ENCODE measurements at regions of chr3 and their contacts with region 1.

Region 1: GRCh38 chr3:182837855-182838454 is 44.7 kb downstream of the ATP11B start:
- DNase-seq: peak; percentile 39
- H3K4me3 ChIP-seq: no peak overlapping the region
- H3K27ac ChIP-seq: no peak overlapping the region
- H3K4me1 ChIP-seq: no peaks in the 10 kb centered on the region
- H3K27me3 ChIP-seq: no peaks in the 10 kb centered on the region
- CTCF ChIP-seq: peak; percentile 61

Region 2: GRCh38 chr3:182294256-182294655 is 543.7 kb before region 1 on chr3:
- CTCF ChIA-PET with region 1: no interaction called
- POLR2A ChIA-PET with region 1: no interaction called
- intact Hi-C with region 1: no loop called
- DNase-seq: no peak
- H3K4me3 ChIP-seq: no peak overlapping the region
- H3K27ac ChIP-seq: no peak overlapping the region
- H3K4me1 ChIP-seq: no peaks in the 10 kb centered on the region
- H3K27me3 ChIP-seq: no peaks in the 10 kb centered on the region
- CTCF ChIP-seq: no peak

Region 3: GRCh38 chr3:182792901-182793662 is 44.9 kb before region 1 on chr3 and contains the start of gene ATP11B:
- CTCF ChIA-PET with region 1: interaction called, 11 read pairs
- POLR2A ChIA-PET with region 1: no interaction called
- intact Hi-C with region 1: no loop called
- DNase-seq: peak; percentile 73
- H3K4me3 ChIP-seq: peak within 1 kb of the TSS; percentile 73
- H3K27ac ChIP-seq: peak within 1 kb of the TSS; percentile 89
- H3K4me1 ChIP-seq: peaks cover 13% of the 10 kb centered on the region
- H3K27me3 ChIP-seq: no peaks in the 10 kb centered on the region
- CTCF ChIP-seq: no peak
- total RNA-seq, gene ATP11B: 68.7 and 70.1 TPM in 2 replicates